HEK293 (cell line): ENCODE measurements at regions of chr11 and their contacts with region 1.

Region 1: DNA sequence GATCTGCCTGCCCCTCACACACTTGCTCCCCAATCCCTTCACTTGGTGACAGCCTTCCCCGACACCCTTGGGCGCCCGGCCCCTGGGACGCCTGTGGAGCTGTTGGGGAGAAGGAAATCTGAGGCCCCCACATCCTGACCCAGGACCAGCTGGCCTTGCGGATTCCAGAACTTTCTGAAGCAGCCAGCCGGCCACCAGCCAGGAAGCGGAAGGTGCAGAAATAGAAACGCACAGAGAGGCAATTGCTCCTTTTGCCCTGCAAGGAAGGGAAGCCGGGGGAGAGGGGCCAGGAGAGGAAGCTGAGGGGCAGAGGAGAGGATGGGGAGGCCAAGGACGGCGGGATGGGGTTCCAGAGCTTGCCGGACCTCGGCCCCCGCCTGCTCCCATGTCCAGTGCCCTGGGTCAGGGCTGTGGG is 66.7 kb upstream of the LINC01488 start:
- H3K4me3 ChIP-seq: no peak overlapping the region
- H3K27ac ChIP-seq: no peak overlapping the region
- H3K4me1 ChIP-seq: no peaks in the 10 kb centered on the region
- CTCF ChIP-seq: no peak

Region 2: DNA sequence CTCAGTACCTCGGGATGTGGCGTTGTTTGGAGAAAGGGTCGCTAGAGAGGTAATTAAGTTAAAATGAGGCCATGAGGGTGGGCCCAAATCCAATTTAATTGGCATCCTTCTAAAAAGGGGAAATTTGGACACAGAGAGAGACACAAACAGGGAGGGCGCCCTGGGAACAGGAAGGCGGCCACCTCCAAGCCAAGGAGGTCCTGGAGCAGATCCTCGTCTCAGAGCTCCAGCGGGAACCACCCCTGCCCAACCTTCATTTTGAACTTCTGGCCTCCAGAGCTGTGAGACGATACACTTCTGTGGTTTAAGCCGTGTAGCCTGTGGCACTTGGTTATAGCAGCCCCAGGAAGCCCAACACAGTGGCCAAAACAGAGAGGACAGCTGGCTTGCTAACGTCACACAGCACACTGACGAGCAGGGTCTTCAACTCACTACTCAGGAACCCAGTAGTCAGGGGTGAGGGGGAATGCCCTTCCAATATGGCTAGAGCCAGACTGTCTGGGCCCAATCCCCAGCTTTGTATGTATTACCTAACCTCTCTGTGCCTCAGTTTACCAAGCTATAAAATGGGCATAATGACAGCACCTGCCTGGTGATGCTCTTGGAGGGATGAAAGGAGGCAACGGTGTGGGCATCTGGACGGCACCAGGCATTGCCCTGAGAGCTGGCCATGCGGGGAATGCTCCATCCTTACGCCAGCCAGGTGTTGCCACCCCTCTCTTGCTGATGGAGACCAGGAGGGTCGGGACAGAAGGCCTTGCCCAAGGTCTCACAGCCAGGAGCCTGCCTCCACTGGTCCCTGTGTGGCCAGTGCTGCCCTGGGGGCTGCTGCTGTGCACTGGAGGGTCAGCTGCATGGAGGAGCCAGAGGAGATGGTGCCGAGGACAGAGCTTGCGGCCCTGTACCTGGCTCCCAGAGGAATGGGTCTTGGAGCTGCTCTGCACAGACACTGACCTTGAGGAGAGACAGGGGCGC is 13.4 kb after region 1 on chr11:
- CTCF ChIA-PET with region 1: no interaction called
- POLR2A ChIA-PET with region 1: interaction called, 11 read pairs
- H3K4me3 ChIP-seq: no peak overlapping the region
- H3K27ac ChIP-seq: no peak overlapping the region
- H3K4me1 ChIP-seq: no peaks in the 10 kb centered on the region
- CTCF ChIP-seq: no peak